Caco-2 (cell line): ENCODE measurements at regions of chr1 and their contacts with region 1.

Region 1: GRCh38 chr1:209565759-209566678 is 17.5 kb upstream of the CAMK1G start:
- DNase-seq: peak; percentile 83 to 86
- H3K4me3 ChIP-seq: no peak overlapping the region
- H3K4me3 Mint-ChIP-seq: no peak overlapping the region
- H3K27ac Mint-ChIP-seq: no peak overlapping the region
- H3K4me1 ChIP-seq: no peaks in the 10 kb centered on the region
- H3K4me1 Mint-ChIP-seq: no peaks in the 10 kb centered on the region
- H3K27me3 ChIP-seq: no peaks in the 10 kb centered on the region
- H3K27me3 Mint-ChIP-seq: peaks cover 9% of the 10 kb centered on the region
- CTCF ChIP-seq: peak; percentile 70 to 79

Region 2: DNA sequence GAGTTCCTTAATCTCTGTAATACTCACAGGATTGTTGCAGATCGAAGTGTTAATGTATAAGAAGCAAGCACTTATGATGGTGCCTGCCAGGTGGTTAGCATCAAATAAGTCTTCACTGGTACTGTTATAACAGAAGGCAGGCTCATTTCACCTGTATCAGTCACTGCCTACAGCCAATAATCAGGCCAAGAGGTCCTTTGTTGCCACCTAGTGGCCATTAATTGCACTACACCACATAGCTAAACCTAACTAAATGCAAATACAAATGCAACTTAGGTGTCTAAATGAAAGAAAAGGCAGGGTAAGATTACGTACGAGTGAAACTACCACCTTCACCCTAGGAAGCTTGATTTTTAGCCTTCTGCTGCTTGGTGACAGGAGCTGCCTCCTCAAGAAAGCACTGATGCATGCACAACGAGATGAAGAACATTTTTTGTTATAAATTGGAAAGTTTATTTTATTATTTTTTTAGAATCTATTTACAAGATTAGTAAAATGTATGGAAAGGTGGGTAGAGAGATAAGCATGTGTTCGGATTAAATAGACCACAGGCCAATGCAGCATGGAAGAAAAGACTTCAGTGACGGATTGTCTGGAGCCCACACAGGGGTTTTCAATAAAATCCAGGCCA is 317.3 kb before region 1 on chr1:
- CTCF ChIA-PET with region 1: interaction called, 5 read pairs
- POLR2A ChIA-PET with region 1: no interaction called
- intact Hi-C with region 1: loop called (anchors 2 kb)
- DNase-seq: peak; percentile 67 to 71
- H3K4me3 ChIP-seq: no peak overlapping the region
- H3K4me3 Mint-ChIP-seq: no peak overlapping the region
- H3K27ac Mint-ChIP-seq: no peak overlapping the region
- H3K4me1 ChIP-seq: no peaks in the 10 kb centered on the region
- H3K4me1 Mint-ChIP-seq: no peaks in the 10 kb centered on the region
- H3K27me3 ChIP-seq: no peaks in the 10 kb centered on the region
- H3K27me3 Mint-ChIP-seq: peaks cover 3% of the 10 kb centered on the region
- CTCF ChIP-seq: peak; percentile 88

Region 3: DNA sequence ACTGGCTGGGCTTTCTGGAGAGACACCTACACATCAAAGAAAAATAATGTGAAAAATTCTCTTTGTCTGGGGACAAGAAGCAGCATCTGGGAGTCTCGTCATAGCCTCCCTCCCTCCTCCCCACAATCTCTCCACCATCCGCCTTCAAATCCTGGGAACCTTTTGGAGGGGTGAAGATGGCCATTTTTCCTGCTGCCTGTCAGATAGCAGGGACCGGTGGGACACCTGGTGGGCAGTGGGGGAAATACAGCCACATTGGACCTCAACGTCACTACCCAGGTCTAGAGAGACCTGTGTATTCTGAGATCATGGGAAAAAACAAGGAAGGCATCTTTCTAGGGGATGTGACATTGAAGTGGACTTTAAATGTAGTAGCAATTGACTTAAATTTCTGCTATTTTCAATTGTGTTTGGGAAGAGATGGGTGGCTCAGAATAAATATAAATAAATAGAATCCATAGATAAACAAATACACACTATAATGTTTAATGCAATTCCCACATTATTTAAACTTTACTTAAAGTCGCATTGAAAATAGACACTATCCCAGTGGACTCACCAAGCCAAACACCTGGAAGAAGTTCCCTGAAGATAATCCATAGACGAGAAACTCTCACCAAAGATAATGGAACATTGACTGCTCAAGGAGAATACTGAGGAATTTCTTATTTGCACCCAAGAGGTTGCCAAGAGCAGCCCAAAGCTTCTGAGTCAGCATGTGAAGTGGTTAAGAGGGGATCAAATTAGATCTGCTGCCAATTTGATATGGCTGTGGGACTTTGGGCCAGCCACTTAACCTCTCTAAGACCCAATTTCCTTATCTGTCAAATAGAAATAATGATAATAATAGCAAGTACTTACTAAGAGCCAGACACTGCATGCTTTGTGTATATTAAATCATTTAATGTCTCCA is 130.1 kb before region 1 on chr1:
- CTCF ChIA-PET with region 1: no interaction called
- POLR2A ChIA-PET with region 1: no interaction called
- intact Hi-C with region 1: loop called (anchors 1 kb)
- DNase-seq: peak; percentile 85 to 91
- H3K4me3 ChIP-seq: no peak overlapping the region
- H3K4me3 Mint-ChIP-seq: no peak overlapping the region
- H3K27ac Mint-ChIP-seq: peak overlapping the region; percentile 0
- H3K4me1 ChIP-seq: peaks cover 45% of the 10 kb centered on the region
- H3K4me1 Mint-ChIP-seq: peaks cover 19% of the 10 kb centered on the region
- H3K27me3 ChIP-seq: no peaks in the 10 kb centered on the region
- H3K27me3 Mint-ChIP-seq: no peaks in the 10 kb centered on the region
- CTCF ChIP-seq: peak; percentile 84 to 94

Region 4: DNA sequence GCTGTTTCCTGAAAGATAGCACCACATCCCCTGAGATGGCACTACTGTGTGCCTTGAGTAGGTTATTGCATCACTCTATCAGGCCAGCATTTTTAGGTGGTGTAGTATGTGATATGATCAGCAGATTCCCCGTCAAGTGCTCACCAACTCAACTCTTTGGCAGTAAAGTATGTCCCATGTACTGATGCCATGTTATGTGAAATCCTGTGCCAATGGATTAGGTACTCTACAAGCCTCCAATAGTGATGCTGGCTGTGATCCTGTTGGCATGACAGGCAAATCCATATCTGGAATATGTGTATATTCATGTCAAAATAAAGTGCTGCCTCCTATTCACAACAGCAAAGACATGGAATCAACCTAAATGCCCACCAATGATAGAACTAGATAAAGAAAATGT is 119.7 kb before region 1 on chr1:
- CTCF ChIA-PET with region 1: no interaction called
- POLR2A ChIA-PET with region 1: no interaction called
- intact Hi-C with region 1: no loop called
- DNase-seq: no peak
- H3K4me3 ChIP-seq: no peak overlapping the region
- H3K4me3 Mint-ChIP-seq: no peak overlapping the region
- H3K27ac Mint-ChIP-seq: no peak overlapping the region
- H3K4me1 ChIP-seq: no peaks in the 10 kb centered on the region
- H3K4me1 Mint-ChIP-seq: no peaks in the 10 kb centered on the region
- H3K27me3 ChIP-seq: no peaks in the 10 kb centered on the region
- H3K27me3 Mint-ChIP-seq: peaks cover 8% of the 10 kb centered on the region
- CTCF ChIP-seq: no peak

Region 5: GRCh38 chr1:209513226-209513625 is 52.8 kb before region 1 on chr1:
- CTCF ChIA-PET with region 1: interaction called, 3 read pairs
- POLR2A ChIA-PET with region 1: no interaction called
- intact Hi-C with region 1: loop called (anchors 5 kb)
- DNase-seq: peak; percentile 35 to 38
- H3K4me3 ChIP-seq: no peak overlapping the region
- H3K4me3 Mint-ChIP-seq: no peak overlapping the region
- H3K27ac Mint-ChIP-seq: no peak overlapping the region
- H3K4me1 ChIP-seq: no peaks in the 10 kb centered on the region
- H3K4me1 Mint-ChIP-seq: no peaks in the 10 kb centered on the region
- H3K27me3 ChIP-seq: no peaks in the 10 kb centered on the region
- H3K27me3 Mint-ChIP-seq: peaks cover 9% of the 10 kb centered on the region
- CTCF ChIP-seq: peak; percentile 59 to 64

Region 6: GRCh38 chr1:209692745-209693504 is 126.9 kb after region 1 on chr1:
- CTCF ChIA-PET with region 1: interaction called, 6 read pairs
- POLR2A ChIA-PET with region 1: interaction called, 3 read pairs
- intact Hi-C with region 1: loop called (anchors 1 kb)
- DNase-seq: peak; percentile 76 to 83
- H3K4me3 ChIP-seq: no peak overlapping the region
- H3K4me3 Mint-ChIP-seq: no peak overlapping the region
- H3K27ac Mint-ChIP-seq: no peak overlapping the region
- H3K4me1 ChIP-seq: peaks cover 16% of the 10 kb centered on the region
- H3K4me1 Mint-ChIP-seq: peaks cover 25% of the 10 kb centered on the region
- H3K27me3 ChIP-seq: no peaks in the 10 kb centered on the region
- H3K27me3 Mint-ChIP-seq: peaks cover 19% of the 10 kb centered on the region
- CTCF ChIP-seq: peak; percentile 80 to 89